ENCODE measurements at regions of chr16 and their contacts with region 1.

Region 1: GRCh38 chr16:31213877-31214708 is at the start of gene TRIM72:
- DNase-seq: no peak
- ATAC-seq: no peak
- H3K4me3 ChIP-seq: no peak within 1 kb of the TSS
- H3K27ac ChIP-seq: no peak within 1 kb of the TSS
- H3K4me1 ChIP-seq: peaks cover 14% of the 10 kb centered on the region
- H3K27me3 ChIP-seq: peaks cover 14 to 18% of the 10 kb centered on the region in 2 experiments
- CTCF ChIP-seq: no peak
- EP300 ChIP-seq: no peak
- POLR2A ChIP-seq: no peak
- RAD21 ChIP-seq: no peak
- polyA plus RNA-seq, gene TRIM72: 0.03 to 0.26 TPM

Region 2: GRCh38 chr16:31038993-31039392 is 175.1 kb before region 1 on chr16:
- CTCF ChIA-PET with region 1: no interaction called
- POLR2A ChIA-PET with region 1: no interaction called
- RAD21 ChIA-PET with region 1: no interaction called
- SMC1A ChIA-PET with region 1: no interaction called
- in situ Hi-C with region 1: no loop called
- intact Hi-C with region 1: no loop called
- DNase-seq: no peak
- ATAC-seq: no peak
- H3K4me3 ChIP-seq: no peak overlapping the region
- H3K27ac ChIP-seq: no peak overlapping the region
- H3K4me1 ChIP-seq: no peaks in the 10 kb centered on the region; the same call in 1 of the 2 replicates
- H3K27me3 ChIP-seq: no peaks in the 10 kb centered on the region
- CTCF ChIP-seq: no peak
- EP300 ChIP-seq: no peak
- POLR2A ChIP-seq: no peak
- RAD21 ChIP-seq: no peak

Region 3: DNA sequence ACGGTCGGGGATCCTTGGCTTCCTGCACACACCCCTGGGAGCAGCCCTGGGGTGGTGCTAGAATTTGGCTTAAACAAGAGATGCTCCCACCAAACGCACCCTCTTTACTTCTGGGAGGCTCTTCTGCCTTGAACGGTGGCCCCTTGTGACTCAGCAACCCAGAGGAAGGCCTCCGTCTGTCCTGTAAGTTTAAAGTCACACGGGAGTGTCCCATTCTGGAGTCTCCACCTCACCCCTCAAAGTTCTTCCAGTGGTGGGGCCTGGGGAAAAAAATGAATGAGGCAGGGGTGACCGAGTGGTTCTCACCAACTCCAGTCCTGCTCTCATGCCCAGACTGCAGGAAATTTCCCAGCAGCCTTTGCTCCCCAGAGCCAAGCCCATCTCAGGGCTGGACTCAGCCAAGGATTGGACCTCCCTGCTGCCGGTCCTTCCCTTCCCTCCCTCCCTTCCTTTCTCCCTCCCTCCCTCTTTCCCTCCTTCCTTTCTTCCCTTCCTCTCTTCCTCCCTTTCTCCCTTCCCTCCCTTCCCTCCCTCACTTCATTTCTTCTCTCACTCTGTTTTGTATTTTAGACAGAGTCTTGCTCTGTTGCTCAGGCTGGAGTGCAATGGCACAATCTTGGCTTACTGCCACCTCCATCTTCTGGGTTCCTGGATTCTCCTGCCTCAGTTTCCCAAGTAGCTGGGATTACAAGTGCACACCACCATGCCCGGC is 190.4 kb after region 1 on chr16:
- CTCF ChIA-PET with region 1: no interaction called
- POLR2A ChIA-PET with region 1: interaction called, 11 read pairs
- RAD21 ChIA-PET with region 1: no interaction called
- SMC1A ChIA-PET with region 1: no interaction called
- in situ Hi-C with region 1: no loop called
- intact Hi-C with region 1: no loop called
- DNase-seq: no peak
- ATAC-seq: no peak
- H3K4me3 ChIP-seq: no peak overlapping the region
- H3K27ac ChIP-seq: no peak overlapping the region
- H3K4me1 ChIP-seq: no peaks in the 10 kb centered on the region
- H3K27me3 ChIP-seq: no peaks in the 10 kb centered on the region
- CTCF ChIP-seq: no peak
- EP300 ChIP-seq: no peak
- POLR2A ChIP-seq: no peak
- RAD21 ChIP-seq: no peak

Measured in GM12878 (cell line).